Naive thymus-derived CD4-positive, alpha-beta T cell (primary cell): ENCODE measurements at regions of chr9 and their contacts with region 1.

Region 1: GRCh38 chr9:31153250-31153840 is 1231.1 kb upstream of the ACO1 start:
- DNase-seq: peak in 1 of 9 donors; percentile 6
- ATAC-seq: no peak
- H3K4me3 ChIP-seq: no peak overlapping the region
- H3K4me3 Mint-ChIP-seq: no peak overlapping the region
- H3K27ac ChIP-seq: no peak overlapping the region
- H3K27ac Mint-ChIP-seq: no peak overlapping the region
- H3K4me1 ChIP-seq: no peaks in the 10 kb centered on the region
- H3K4me1 Mint-ChIP-seq: peaks cover 0 to 17% (median 4%) of the 10 kb centered on the region in 7 donors
- H3K27me3 ChIP-seq: no peaks in the 10 kb centered on the region
- H3K27me3 Mint-ChIP-seq: no peaks in the 10 kb centered on the region

Region 2: DNA sequence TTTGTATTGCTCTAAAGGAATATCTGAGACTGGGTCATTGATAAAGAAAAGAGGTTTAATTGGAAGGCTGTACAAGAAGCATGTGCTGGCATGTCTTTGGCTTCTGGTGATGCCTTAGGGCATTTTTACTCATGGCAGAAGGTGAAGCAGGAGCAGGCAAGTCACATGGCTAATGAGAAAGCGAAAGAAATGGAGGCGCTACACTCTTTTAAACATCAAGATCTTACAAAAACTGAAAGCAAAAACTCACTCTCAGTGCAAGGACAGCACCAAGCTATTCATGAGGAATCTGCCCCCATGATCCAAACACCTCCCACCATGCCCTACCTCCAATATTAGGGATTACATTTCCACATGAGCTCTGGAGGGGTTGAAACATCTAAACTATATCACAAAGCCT is 227.7 kb before region 1 on chr9:
- CTCF ChIA-PET with region 1: no interaction called
- POLR2A ChIA-PET with region 1: no interaction called
- intact Hi-C with region 1: no loop called
- DNase-seq: no peak
- ATAC-seq: no peak
- H3K4me3 ChIP-seq: no peak overlapping the region
- H3K4me3 Mint-ChIP-seq: no peak overlapping the region
- H3K27ac ChIP-seq: no peak overlapping the region
- H3K27ac Mint-ChIP-seq: no peak overlapping the region
- H3K4me1 ChIP-seq: no peaks in the 10 kb centered on the region
- H3K4me1 Mint-ChIP-seq: no peaks in the 10 kb centered on the region
- H3K27me3 ChIP-seq: no peaks in the 10 kb centered on the region
- H3K27me3 Mint-ChIP-seq: no peaks in the 10 kb centered on the region

Region 3: DNA sequence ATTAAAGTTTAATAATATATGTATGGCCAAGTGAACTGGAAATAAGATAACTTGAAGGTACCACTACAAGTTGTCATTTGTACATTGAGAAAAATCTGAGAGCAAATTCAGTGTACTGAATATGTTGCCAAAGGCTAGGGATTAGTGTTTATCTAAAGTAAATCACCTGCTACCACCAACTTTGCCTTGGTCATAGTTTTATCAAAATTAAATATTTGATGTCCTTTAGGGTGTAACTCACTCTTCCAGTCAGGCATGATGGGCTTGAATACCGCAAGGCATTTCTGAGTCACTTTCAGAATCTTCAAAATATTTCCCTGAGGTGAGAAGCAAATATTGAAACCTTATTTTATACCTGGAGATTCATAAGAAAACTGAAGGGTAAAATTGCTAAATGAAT is 107.6 kb before region 1 on chr9:
- CTCF ChIA-PET with region 1: no interaction called
- POLR2A ChIA-PET with region 1: no interaction called
- intact Hi-C with region 1: no loop called
- DNase-seq: no peak
- ATAC-seq: no peak
- H3K4me3 ChIP-seq: no peak overlapping the region
- H3K4me3 Mint-ChIP-seq: no peak overlapping the region
- H3K27ac ChIP-seq: no peak overlapping the region
- H3K27ac Mint-ChIP-seq: no peak overlapping the region
- H3K4me1 ChIP-seq: no peaks in the 10 kb centered on the region
- H3K4me1 Mint-ChIP-seq: peaks cover 0 to 3% (median 0%) of the 10 kb centered on the region in 7 donors
- H3K27me3 ChIP-seq: no peaks in the 10 kb centered on the region
- H3K27me3 Mint-ChIP-seq: peaks cover 0 to 6% (median 0%) of the 10 kb centered on the region in 5 donors

Region 4: DNA sequence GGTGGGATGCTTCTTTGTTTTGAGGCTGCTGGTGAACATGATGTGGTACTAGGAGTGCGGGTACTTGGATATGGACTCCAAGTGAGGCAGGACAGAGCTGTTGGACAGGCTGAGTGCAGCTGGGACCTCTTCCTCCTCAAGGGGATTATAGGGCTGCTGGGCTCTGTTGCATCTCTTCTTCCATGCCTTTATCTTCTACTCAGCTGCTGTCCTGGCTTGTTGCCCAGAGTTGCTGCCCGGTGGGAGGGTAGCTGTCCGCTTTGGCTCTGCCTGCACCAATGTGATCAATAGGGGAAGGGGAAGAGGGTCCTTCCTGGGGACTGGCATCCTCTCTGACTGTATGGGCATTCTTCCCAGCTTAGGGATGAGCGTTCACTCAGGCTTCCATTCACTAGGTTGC is 13.2 kb after region 1 on chr9:
- CTCF ChIA-PET with region 1: no interaction called
- POLR2A ChIA-PET with region 1: interaction called, 3 read pairs
- intact Hi-C with region 1: loop called in 1 of 2 experiments (anchors 2 kb)
- DNase-seq: no peak
- ATAC-seq: no peak
- H3K4me3 ChIP-seq: no peak overlapping the region
- H3K4me3 Mint-ChIP-seq: no peak overlapping the region
- H3K27ac ChIP-seq: no peak overlapping the region
- H3K27ac Mint-ChIP-seq: no peak overlapping the region
- H3K4me1 ChIP-seq: no peaks in the 10 kb centered on the region
- H3K4me1 Mint-ChIP-seq: peaks cover 0 to 5% (median 0%) of the 10 kb centered on the region in 7 donors
- H3K27me3 ChIP-seq: no peaks in the 10 kb centered on the region
- H3K27me3 Mint-ChIP-seq: no peaks in the 10 kb centered on the region